Mammary epithelial cell (primary cell): ENCODE measurements at regions of chr12 and their contacts with region 1.

Region 1: GRCh38 chr12:104108755-104109445 is 29.1 kb downstream of the NFYB start:
- DNase-seq: peak; percentile 65
- H3K4me3 ChIP-seq: no peak overlapping the region
- H3K27ac ChIP-seq: no peak overlapping the region
- H3K4me1 ChIP-seq: no peaks in the 10 kb centered on the region
- H3K27me3 ChIP-seq: no peaks in the 10 kb centered on the region
- CTCF ChIP-seq: peak; percentile 94 to 98

Region 2: GRCh38 chr12:103626498-103626897 is 482.4 kb before region 1 on chr12:
- CTCF ChIA-PET with region 1: no interaction called
- dilution Hi-C with region 1: no loop called
- in situ Hi-C with region 1: no loop called
- intact Hi-C with region 1: loop called (anchors 10 kb)
- DNase-seq: peak; percentile 66
- H3K4me3 ChIP-seq: no peak overlapping the region
- H3K27ac ChIP-seq: no peak overlapping the region
- H3K4me1 ChIP-seq: no peaks in the 10 kb centered on the region
- H3K27me3 ChIP-seq: no peaks in the 10 kb centered on the region
- CTCF ChIP-seq: peak; percentile 24 to 42

Region 3: GRCh38 chr12:103877934-103878510 is 230.9 kb before region 1 on chr12:
- CTCF ChIA-PET with region 1: no interaction called
- dilution Hi-C with region 1: no loop called
- in situ Hi-C with region 1: loop called (anchors 5 to 10 kb)
- intact Hi-C with region 1: loop called (anchors 1 kb)
- DNase-seq: peak; percentile 72
- H3K4me3 ChIP-seq: no peak overlapping the region
- H3K27ac ChIP-seq: no peak overlapping the region
- H3K4me1 ChIP-seq: peaks cover 27% of the 10 kb centered on the region
- H3K27me3 ChIP-seq: no peaks in the 10 kb centered on the region
- CTCF ChIP-seq: peak; percentile 82 to 86

Region 4: DNA sequence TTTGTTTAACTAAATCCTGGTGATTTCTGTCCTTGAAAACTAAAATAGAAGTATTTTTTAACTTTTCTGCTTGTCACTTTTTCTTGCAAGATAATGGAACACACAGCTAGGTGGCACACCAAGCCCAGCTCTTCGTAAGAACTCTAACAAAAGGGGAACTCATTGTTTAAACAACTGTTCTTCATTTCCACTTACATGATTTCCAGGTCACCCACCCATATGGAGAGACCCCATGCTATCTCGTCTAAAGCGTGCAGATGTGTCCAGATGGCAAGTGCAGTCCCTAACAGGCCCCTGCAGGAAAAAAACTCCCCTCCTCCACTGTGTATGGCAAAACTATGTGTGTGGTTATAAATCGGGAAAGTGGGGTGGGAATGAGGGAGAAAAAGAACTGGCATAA is 224.6 kb before region 1 on chr12:
- CTCF ChIA-PET with region 1: interaction called, 5 read pairs
- dilution Hi-C with region 1: no loop called
- in situ Hi-C with region 1: loop called (anchors 5 to 10 kb)
- intact Hi-C with region 1: loop called (anchors 1 kb)
- DNase-seq: peak; percentile 16
- H3K4me3 ChIP-seq: no peak overlapping the region
- H3K27ac ChIP-seq: no peak overlapping the region
- H3K4me1 ChIP-seq: peaks cover 29% of the 10 kb centered on the region
- H3K27me3 ChIP-seq: no peaks in the 10 kb centered on the region
- CTCF ChIP-seq: peak; percentile 58 to 59

Region 5: GRCh38 chr12:103965590-103966504 is 143.1 kb before region 1 on chr12 and contains the start of gene TDG:
- CTCF ChIA-PET with region 1: no interaction called
- dilution Hi-C with region 1: no loop called
- in situ Hi-C with region 1: no loop called
- intact Hi-C with region 1: loop called (anchors 2 kb)
- DNase-seq: peak; percentile 98
- H3K4me3 ChIP-seq: peak within 1 kb of the TSS; percentile 82 to 91 (median 89)
- H3K27ac ChIP-seq: peak within 1 kb of the TSS; percentile 88
- H3K4me1 ChIP-seq: peaks cover 12% of the 10 kb centered on the region
- H3K27me3 ChIP-seq: no peaks in the 10 kb centered on the region
- CTCF ChIP-seq: peak in 1 of 2 donors; percentile 37
- total RNA-seq, gene TDG: 27.3 to 42.0 TPM

Region 6: DNA sequence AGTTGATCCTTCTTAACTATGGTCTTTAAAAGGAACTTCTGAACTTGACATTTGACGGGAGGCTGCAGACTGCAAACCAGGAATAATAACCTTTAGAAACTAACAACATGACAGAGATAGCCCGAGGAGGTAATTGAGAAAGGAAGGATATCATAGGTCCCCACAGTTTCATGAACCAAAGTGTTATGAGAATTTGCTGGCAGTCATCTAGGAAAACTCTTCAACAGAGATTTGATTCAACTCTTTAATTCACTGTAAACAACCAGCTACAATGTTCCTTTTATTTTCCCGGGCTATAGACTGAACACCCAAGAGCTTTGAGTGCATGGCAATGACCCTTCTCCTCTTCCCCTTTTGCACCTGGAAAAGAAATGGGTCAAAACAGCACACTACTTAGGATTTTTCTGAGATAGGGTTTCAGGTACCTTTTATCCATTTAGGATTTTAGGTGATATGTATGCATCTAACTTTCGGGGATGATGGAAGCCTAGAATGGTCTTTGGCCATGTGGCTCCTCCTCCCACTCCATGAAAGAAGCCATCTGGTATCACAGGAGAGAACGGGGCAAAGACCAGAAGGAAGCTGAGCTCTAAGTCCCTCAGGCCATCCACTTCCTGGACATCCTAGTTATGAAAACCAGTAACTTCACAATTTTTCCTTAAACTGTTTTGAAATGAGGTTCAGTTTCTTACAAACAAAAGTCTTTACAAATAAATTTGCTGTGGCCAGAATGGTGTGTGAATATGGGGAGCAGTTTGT is 81.9 kb before region 1 on chr12:
- CTCF ChIA-PET with region 1: interaction called, 10 read pairs
- dilution Hi-C with region 1: no loop called
- in situ Hi-C with region 1: no loop called
- intact Hi-C with region 1: no loop called
- DNase-seq: no peak
- H3K4me3 ChIP-seq: no peak overlapping the region
- H3K27ac ChIP-seq: no peak overlapping the region
- H3K4me1 ChIP-seq: no peaks in the 10 kb centered on the region
- H3K27me3 ChIP-seq: no peaks in the 10 kb centered on the region
- CTCF ChIP-seq: no peak

Region 7: GRCh38 chr12:104057771-104058197 is 51.1 kb before region 1 on chr12:
- CTCF ChIA-PET with region 1: interaction called, 5 read pairs
- dilution Hi-C with region 1: no loop called
- in situ Hi-C with region 1: no loop called
- intact Hi-C with region 1: loop called (anchors 1 kb)
- DNase-seq: no peak
- H3K4me3 ChIP-seq: no peak overlapping the region
- H3K27ac ChIP-seq: no peak overlapping the region
- H3K4me1 ChIP-seq: peaks cover 24% of the 10 kb centered on the region
- H3K27me3 ChIP-seq: no peaks in the 10 kb centered on the region
- CTCF ChIP-seq: peak; percentile 80 to 86